Activated CD4-positive, alpha-beta T cell treated with anti-CD3 and anti-CD28 coated beads, Interleukin-2, amount 10 ng/mL, durations not matched to agents 24 days and 14 days (primary cell): ENCODE measurements at regions of chr11 and their contacts with region 1.

Region 1: GRCh38 chr11:73578592-73579185 is 19.2 kb downstream of the FAM168A start:
- DNase-seq: peak; percentile 71
- H3K4me3 Mint-ChIP-seq: no peak overlapping the region
- H3K27ac Mint-ChIP-seq: peak overlapping the region; percentile 68
- H3K4me1 Mint-ChIP-seq: peaks cover 23% of the 10 kb centered on the region
- H3K27me3 Mint-ChIP-seq: no peaks in the 10 kb centered on the region

Region 2: GRCh38 chr11:73538381-73538872 is 40.3 kb before region 1 on chr11:
- intact Hi-C with region 1: loop called (anchors 5 kb)
- DNase-seq: peak; percentile 78
- H3K4me3 Mint-ChIP-seq: peak overlapping the region; percentile 50
- H3K27ac Mint-ChIP-seq: peak overlapping the region; percentile 83
- H3K4me1 Mint-ChIP-seq: peaks cover 22% of the 10 kb centered on the region
- H3K27me3 Mint-ChIP-seq: no peaks in the 10 kb centered on the region

Region 3: DNA sequence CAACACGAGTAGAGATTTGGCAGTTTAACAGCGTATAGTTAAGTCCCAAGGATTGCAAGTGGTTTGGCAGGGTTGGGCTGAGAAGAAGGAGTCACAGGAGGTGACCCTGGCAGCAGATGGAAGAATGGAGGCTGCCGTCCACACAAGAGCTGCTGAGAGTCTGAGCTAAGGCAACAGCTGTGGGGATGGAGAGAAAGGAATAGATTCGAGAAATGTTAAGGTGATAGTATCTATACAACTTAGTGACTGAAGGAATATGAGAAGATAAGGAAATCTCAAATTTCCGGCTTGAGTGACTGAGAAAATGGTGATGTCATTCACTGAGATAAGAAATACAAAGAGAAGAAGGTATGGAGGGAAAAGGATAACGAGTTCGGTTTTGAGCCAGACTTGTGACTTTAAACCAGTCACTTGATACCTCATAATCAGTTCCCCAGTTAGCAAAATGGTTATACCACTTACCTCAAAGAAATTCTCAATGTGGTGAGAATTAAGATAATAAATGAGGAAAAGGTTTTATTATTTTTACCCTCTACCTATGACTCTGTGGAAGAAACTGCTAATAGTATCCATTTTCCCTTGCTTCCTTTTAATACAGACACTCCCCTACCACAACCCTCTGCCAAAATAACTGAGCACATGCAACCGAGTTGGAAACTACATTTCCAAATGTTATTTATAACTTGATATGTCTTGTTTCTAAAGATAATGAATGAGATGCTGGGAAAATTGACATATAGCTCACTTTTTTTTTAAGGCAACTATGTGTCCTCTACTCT is 11.5 kb before region 1 on chr11:
- intact Hi-C with region 1: no loop called
- DNase-seq: no peak
- H3K4me3 Mint-ChIP-seq: no peak overlapping the region
- H3K27ac Mint-ChIP-seq: no peak overlapping the region
- H3K4me1 Mint-ChIP-seq: peaks cover 1% of the 10 kb centered on the region
- H3K27me3 Mint-ChIP-seq: no peaks in the 10 kb centered on the region